Activated CD8-positive, alpha-beta T cell treated with anti-CD3 and anti-CD28 coated beads for 36 hours (primary cell): ENCODE measurements at regions of chr4 and their contacts with region 1.

Region 1: GRCh38 chr4:99808260-99808857 is 8.3 kb upstream of the DAPP1 start:
- DNase-seq: peak; percentile 82
- ATAC-seq: peak; percentile 97
- H3K4me3 Mint-ChIP-seq: no peak overlapping the region
- H3K27ac Mint-ChIP-seq: no peak overlapping the region
- H3K4me1 Mint-ChIP-seq: peaks cover 4% of the 10 kb centered on the region
- H3K27me3 Mint-ChIP-seq: peaks cover 1% of the 10 kb centered on the region
- CTCF ChIP-seq: peak; percentile 80

Region 2: GRCh38 chr4:99300934-99301333 is 507.4 kb before region 1 on chr4:
- CTCF ChIA-PET with region 1: no interaction called
- POLR2A ChIA-PET with region 1: no interaction called
- intact Hi-C with region 1: no loop called
- DNase-seq: no peak
- ATAC-seq: no peak
- H3K4me3 Mint-ChIP-seq: no peak overlapping the region
- H3K27ac Mint-ChIP-seq: no peak overlapping the region
- H3K4me1 Mint-ChIP-seq: no peaks in the 10 kb centered on the region
- H3K27me3 Mint-ChIP-seq: no peaks in the 10 kb centered on the region
- CTCF ChIP-seq: no peak

Region 3: GRCh38 chr4:99563310-99564186 is 244.8 kb before region 1 on chr4 and contains the start of gene TRMT10A:
- CTCF ChIA-PET with region 1: interaction called, 27 read pairs
- POLR2A ChIA-PET with region 1: interaction called, 3 read pairs
- intact Hi-C with region 1: loop called (anchors 2 kb)
- DNase-seq: peak; percentile 98
- ATAC-seq: peak; percentile 89
- H3K4me3 Mint-ChIP-seq: peak within 1 kb of the TSS; percentile 90
- H3K27ac Mint-ChIP-seq: peak within 1 kb of the TSS; percentile 98
- H3K4me1 Mint-ChIP-seq: peaks cover 8% of the 10 kb centered on the region
- H3K27me3 Mint-ChIP-seq: peaks cover 12% of the 10 kb centered on the region
- CTCF ChIP-seq: no peak
- total RNA-seq, gene TRMT10A: 7.7 to 8.0 TPM

Region 4: DNA sequence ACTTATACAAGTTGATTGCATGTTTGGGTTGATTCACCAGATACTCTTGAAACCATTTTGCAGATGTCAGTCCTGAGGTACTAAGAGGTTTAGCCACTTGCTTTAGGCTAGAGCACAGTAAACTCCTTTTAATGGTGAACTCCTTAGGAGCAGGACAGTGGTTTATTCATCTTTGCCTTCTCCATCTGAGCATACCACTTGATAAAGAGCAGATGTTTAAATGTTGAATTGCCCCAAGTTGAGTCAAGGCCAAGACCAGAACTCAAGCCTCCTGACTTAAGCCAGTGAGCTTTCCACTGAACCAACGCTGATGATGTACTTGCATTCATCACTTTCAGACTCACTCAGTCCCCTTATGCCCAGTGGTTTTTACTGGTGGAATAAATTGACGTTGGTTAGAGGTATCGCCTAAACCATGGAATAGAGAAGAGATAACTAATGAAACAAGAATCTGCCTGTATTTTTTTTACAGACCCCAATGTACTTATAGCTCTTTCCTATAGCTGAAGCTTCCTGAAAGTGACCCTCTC is 15.8 kb after region 1 on chr4:
- CTCF ChIA-PET with region 1: interaction called, 23 read pairs
- POLR2A ChIA-PET with region 1: interaction called, 3 read pairs
- intact Hi-C with region 1: no loop called
- DNase-seq: no peak
- ATAC-seq: no peak
- H3K4me3 Mint-ChIP-seq: no peak overlapping the region
- H3K27ac Mint-ChIP-seq: no peak overlapping the region
- H3K4me1 Mint-ChIP-seq: peaks cover 43% of the 10 kb centered on the region
- H3K27me3 Mint-ChIP-seq: no peaks in the 10 kb centered on the region
- CTCF ChIP-seq: no peak

Region 5: GRCh38 chr4:99845708-99846469 is 37.5 kb after region 1 on chr4:
- CTCF ChIA-PET with region 1: interaction called, 10 read pairs
- POLR2A ChIA-PET with region 1: no interaction called
- intact Hi-C with region 1: no loop called
- DNase-seq: peak; percentile 13
- ATAC-seq: peak; percentile 12
- H3K4me3 Mint-ChIP-seq: no peak overlapping the region
- H3K27ac Mint-ChIP-seq: peak overlapping the region; percentile 90
- H3K4me1 Mint-ChIP-seq: peaks cover 55% of the 10 kb centered on the region
- H3K27me3 Mint-ChIP-seq: no peaks in the 10 kb centered on the region
- CTCF ChIP-seq: no peak

Region 6: GRCh38 chr4:99879458-99879857 is 71.1 kb after region 1 on chr4:
- CTCF ChIA-PET with region 1: interaction called, 53 read pairs
- POLR2A ChIA-PET with region 1: no interaction called
- intact Hi-C with region 1: no loop called
- DNase-seq: no peak
- ATAC-seq: no peak
- H3K4me3 Mint-ChIP-seq: no peak overlapping the region
- H3K27ac Mint-ChIP-seq: no peak overlapping the region
- H3K4me1 Mint-ChIP-seq: no peaks in the 10 kb centered on the region
- H3K27me3 Mint-ChIP-seq: no peaks in the 10 kb centered on the region
- CTCF ChIP-seq: no peak

Region 7: DNA sequence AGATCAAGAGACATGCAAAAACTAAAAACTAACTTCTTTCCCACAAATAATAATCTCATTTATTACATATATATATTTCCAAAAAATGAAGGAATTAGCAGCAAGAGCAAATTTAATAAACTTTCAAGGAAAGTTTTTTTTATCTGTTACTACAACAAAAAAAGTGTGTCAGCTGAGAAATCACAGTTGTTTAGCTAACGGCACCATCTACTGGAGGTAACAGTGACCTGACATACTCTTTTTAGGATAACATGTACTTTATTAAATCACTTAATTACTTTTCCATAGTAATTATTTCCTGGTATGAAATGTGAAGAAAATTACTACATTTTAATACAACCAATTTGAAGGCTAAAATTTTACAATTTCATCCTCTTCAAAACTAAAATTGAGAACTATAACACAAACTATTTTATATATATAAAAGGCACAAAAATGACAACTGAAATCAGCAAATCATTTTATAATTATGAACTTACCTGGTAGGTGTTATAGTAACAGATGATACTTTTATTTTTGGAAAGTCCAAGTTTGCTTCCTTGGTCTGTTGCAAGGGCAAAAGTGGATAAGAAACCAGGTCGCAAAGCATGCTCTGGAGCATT is 76.8 kb after region 1 on chr4:
- CTCF ChIA-PET with region 1: interaction called, 53 read pairs
- POLR2A ChIA-PET with region 1: no interaction called
- intact Hi-C with region 1: loop called (anchors 1 kb)
- DNase-seq: peak; percentile 46
- ATAC-seq: peak; percentile 62
- H3K4me3 Mint-ChIP-seq: no peak overlapping the region
- H3K27ac Mint-ChIP-seq: no peak overlapping the region
- H3K4me1 Mint-ChIP-seq: peaks cover 10% of the 10 kb centered on the region
- H3K27me3 Mint-ChIP-seq: no peaks in the 10 kb centered on the region
- CTCF ChIP-seq: peak; percentile 82

Region 8: DNA sequence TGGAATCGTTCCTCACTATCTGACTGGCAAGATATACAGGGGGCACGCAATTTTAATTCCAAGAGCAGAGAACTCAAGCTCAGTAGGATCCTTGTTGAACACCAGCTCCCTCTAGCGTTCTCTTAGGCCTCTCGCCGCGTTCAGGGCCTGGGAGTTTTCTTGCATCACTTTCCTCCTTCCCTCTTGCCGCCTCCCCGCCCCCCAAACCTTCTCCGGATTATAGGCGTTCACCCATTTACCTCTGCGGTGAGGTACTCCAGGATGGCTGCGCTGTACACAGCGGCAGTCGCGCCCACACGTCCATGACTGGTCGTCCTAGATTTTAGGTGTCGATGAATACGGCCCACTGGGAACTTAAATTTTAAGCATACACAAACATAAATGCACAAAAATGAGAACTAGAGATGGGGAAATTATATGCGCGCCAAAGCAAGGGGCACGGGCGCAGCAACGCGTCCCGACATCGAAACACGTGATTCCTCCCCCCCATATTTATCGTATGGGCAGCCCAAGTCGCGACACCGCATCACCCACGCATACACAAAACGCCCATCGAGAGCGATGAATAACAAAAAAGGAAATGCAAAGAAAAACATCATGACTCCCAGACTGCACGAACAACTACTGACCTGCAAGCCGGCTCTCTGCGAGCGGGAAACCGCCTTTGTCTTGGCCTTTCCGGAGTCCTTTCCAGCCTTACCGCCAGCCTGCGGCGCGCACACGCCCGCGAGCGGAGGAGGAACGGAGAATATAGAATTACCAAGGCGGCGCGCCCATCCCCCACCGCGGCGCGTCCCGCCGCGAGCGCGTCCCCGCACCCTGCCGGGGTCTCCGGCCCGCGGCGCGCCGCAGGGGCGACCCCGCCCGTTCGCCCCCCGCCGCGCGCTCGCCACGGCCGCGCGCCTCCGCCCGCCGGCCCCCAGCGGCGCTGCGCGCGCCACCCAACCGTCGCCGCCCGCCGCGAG is 141.0 kb after region 1 on chr4:
- CTCF ChIA-PET with region 1: interaction called, 16 read pairs
- POLR2A ChIA-PET with region 1: interaction called, 7 read pairs
- intact Hi-C with region 1: no loop called
- DNase-seq: peak; percentile 97
- ATAC-seq: peak; percentile 40
- H3K4me3 Mint-ChIP-seq: no peak overlapping the region
- H3K27ac Mint-ChIP-seq: no peak overlapping the region
- H3K4me1 Mint-ChIP-seq: peaks cover 37% of the 10 kb centered on the region
- H3K27me3 Mint-ChIP-seq: no peaks in the 10 kb centered on the region
- CTCF ChIP-seq: peak; percentile 79

Region 9: DNA sequence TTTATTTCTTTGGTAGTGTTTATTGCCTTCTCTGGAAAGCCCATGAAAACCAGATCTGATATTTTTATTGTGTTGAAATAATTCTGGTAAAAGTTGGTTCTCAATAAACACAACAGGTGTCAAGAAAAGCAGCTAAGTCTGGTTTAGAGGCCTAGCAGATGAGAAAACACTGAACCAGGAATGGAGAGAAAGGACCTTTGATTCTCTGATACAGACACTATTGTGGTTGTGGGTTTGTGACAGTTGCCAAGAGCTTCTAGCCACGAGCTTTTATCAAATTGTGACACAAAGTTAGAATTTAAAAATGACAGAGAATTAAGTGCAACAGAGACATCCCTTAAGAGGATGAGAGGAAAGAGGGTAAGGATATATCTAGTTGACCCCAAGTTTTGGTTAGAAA is 339.3 kb after region 1 on chr4:
- CTCF ChIA-PET with region 1: no interaction called
- POLR2A ChIA-PET with region 1: no interaction called
- intact Hi-C with region 1: no loop called
- DNase-seq: no peak
- ATAC-seq: no peak
- H3K4me3 Mint-ChIP-seq: no peak overlapping the region
- H3K27ac Mint-ChIP-seq: no peak overlapping the region
- H3K4me1 Mint-ChIP-seq: peaks cover 7% of the 10 kb centered on the region
- H3K27me3 Mint-ChIP-seq: no peaks in the 10 kb centered on the region
- CTCF ChIP-seq: no peak